GM10248 (cell line): ENCODE measurements at regions of chr9 and their contacts with region 1.

Region 1: DNA sequence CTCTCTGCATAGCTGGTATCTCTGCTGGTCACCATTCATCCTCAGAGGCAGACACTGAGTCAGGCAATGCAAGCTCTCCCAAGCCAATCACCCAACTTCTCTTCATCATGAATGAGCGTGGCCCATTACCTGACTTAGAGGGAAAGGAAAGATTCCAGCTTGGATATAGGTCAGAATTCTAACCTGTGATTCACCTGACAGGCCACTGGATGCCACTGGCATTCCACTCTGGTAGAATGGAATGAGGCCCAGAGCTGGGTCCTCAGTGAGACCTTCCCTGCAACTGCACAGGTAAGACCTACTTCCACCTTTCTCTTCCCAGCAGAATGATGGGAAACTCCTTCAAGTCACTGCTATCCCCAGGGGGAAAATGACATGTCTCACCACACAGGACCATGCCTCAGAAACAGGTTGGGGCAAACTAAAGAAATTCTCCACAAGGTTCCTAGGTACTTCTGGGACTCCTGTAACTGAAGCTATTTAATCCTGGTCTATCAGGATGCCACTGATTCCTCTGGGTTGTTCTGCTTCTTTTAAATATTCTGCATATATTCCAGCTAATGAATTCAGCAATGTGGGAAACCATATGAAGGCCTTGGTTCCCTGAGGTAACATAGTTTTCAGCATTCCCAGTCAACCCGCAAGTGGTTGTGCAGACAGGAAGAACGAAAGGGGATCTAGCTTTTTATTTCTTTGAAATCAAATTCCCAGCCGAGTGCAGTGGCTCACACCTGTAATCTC is 62.0 kb downstream of the SUSD1 start:
- DNase-seq: peak; percentile 29
- CTCF ChIP-seq: peak; percentile 50

Region 2: GRCh38 chr9:111945216-111945615 is 167.9 kb before region 1 on chr9:
- CTCF ChIA-PET with region 1: no interaction called
- POLR2A ChIA-PET with region 1: no interaction called
- DNase-seq: peak; percentile 58
- CTCF ChIP-seq: no peak

Region 3: DNA sequence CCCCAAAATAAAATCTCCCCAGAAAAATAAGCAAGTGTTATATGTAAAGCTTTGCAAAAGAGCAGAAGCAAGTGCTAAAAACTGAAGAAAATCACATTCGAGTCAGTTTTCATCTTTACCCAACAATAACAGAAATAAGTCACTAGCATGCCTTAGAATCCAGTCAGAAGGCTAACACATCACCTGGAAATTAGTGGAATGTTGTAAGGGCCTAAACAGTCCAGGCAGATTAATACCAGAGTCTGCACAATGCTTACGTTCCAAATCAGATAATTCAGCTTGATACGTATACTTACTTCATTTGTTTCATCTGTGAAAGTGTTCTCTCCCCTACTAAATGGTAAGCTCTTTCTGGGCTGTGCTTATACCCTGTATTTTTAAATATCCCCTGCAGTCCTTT is 19.2 kb after region 1 on chr9:
- CTCF ChIA-PET with region 1: interaction called, 13 read pairs
- POLR2A ChIA-PET with region 1: no interaction called
- DNase-seq: no peak
- CTCF ChIP-seq: no peak

Region 4: GRCh38 chr9:112145886-112146285 is 32.8 kb after region 1 on chr9:
- CTCF ChIA-PET with region 1: no interaction called
- POLR2A ChIA-PET with region 1: no interaction called
- DNase-seq: no peak
- CTCF ChIP-seq: no peak

Region 5: DNA sequence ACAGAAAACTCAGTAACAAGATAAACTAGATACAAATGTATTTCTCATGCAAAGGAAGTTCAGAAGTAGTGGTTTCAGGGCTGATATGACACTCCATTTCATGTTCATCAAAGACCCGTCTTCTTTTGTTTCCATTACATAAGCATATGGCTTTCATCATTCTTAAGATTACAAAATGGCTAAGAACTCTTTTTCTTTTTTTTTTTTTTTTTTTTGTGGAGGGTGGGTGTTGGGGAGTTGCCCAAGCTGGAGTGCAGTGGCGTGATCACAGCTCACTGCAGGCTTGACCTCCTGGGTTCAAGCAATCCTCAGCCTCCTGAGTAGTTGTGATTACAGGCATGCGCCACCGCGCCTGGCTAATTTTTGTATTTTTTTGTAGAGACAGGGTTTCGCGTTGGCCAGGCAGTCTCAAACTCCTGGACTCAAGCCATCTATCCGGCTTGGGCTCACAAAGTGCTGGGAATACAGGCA is 242.4 kb after region 1 on chr9:
- CTCF ChIA-PET with region 1: interaction called, 43 read pairs
- POLR2A ChIA-PET with region 1: no interaction called
- DNase-seq: peak; percentile 29
- CTCF ChIP-seq: no peak